ENCODE measurements at regions of chr18 and their contacts with region 1.

Region 1: DNA sequence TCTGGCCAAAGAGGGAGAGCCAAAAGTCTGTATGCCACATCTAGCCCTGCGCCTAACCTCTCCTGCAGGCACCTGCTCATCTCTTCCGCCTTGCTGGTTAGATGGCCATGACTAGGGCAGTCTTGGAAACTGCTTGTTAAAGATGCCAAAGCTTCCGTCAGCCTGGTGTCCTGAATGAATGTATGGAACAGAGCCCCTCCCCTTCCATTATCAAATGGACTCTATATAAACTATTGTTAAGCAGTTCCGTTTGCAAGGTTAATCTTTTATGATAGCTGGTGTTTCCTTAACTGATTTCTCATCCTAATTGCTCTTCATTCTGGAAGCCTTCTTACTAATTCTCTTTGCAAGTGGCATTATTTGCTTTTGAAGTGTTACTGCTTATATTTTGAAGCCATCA is 87.1 kb downstream of the ATP9B start:
- DNase-seq: no peak
- ATAC-seq: no peak
- H3K4me3 Mint-ChIP-seq: no peak overlapping the region
- H3K27ac Mint-ChIP-seq: no peak overlapping the region
- H3K4me1 Mint-ChIP-seq: peaks cover 11% of the 10 kb centered on the region
- H3K27me3 Mint-ChIP-seq: no peaks in the 10 kb centered on the region

Region 2: DNA sequence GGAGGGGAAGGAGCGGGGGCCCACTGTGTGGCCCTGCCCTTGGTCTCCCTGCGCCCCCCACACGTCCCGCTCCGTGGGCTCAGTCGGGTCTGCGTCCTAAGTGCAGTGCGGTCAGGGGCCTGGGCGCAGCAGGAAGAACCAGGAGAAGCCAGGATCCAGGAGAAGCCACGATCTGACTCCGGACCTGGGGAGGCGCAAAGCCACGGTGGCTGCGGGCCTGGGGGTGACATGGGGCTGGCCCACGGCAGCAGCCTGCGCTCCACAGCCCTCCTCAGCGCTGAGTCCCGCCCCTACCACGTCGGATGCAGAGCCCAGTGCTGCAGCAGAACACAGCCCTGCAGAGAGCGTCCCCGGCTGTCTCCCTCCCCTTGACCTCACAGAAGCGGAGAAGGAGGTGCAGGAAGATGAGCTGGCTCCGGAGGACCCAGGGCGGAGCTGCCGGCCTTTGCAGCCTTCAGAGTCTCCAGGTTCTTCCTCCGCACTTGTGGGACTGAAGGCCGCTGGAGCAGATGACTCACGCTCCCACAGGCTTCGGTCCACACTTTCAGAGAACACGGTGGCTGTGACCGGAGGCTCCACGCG is 765.9 kb before region 1 on chr18:
- CTCF ChIA-PET with region 1: no interaction called
- POLR2A ChIA-PET with region 1: no interaction called
- intact Hi-C with region 1: no loop called
- DNase-seq: no peak
- ATAC-seq: no peak
- H3K4me3 Mint-ChIP-seq: no peak overlapping the region
- H3K27ac Mint-ChIP-seq: no peak overlapping the region
- H3K4me1 Mint-ChIP-seq: no peaks in the 10 kb centered on the region
- H3K27me3 Mint-ChIP-seq: no peaks in the 10 kb centered on the region

Region 3: DNA sequence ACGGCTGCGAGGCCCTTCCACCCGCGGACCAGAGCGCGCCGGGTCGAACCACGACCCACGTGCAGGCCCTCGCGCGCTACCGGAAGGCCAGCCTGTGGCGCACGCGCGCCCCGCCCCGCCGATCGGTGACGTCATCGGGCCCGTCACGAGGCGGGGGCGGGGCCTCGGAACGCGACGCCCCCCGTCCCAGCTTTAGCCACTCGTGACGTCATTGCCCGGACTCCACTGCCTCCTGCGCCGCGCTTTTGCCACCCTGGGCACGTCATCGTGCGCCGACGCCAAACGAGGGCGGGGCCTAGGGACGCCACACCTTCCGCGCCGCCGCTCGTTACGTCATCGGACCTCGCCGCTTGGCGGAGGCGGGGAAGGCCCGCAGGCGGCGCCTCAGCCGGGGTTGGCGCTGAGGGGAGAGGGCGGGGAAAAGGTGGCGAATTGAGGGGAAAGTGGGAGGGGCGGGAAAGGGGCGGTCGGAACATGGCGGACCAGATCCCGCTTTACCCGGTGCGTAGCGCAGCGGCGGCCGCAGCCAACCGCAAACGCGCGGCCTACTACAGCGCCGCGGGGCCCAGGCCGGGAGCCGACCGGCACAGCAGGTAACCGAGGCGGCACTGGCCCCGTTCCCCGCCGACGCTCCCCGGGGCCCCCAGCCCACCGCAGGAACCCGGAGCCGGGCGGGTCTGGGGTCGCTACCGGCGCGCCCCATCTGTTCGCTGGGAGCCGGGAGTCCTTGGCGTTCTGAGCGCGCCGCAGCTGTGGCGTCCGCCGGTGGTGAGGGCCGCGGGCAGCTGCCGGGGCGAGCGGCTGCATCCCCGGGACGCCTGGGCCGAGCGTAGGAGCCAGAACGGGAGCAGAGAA is 87.2 kb before region 1 on chr18 and contains the start of gene ATP9B:
- CTCF ChIA-PET with region 1: no interaction called
- POLR2A ChIA-PET with region 1: no interaction called
- intact Hi-C with region 1: loop called in 1 of 2 experiments (anchors 5 kb)
- DNase-seq: peak; percentile 99
- ATAC-seq: peak; percentile 83
- H3K4me3 Mint-ChIP-seq: peak within 1 kb of the TSS; percentile 87
- H3K27ac Mint-ChIP-seq: peak within 1 kb of the TSS; percentile 99
- H3K4me1 Mint-ChIP-seq: peaks cover 38% of the 10 kb centered on the region
- H3K27me3 Mint-ChIP-seq: peaks cover 11% of the 10 kb centered on the region
- total RNA-seq, gene ATP9B: 19.4 to 20.8 TPM

Region 4: DNA sequence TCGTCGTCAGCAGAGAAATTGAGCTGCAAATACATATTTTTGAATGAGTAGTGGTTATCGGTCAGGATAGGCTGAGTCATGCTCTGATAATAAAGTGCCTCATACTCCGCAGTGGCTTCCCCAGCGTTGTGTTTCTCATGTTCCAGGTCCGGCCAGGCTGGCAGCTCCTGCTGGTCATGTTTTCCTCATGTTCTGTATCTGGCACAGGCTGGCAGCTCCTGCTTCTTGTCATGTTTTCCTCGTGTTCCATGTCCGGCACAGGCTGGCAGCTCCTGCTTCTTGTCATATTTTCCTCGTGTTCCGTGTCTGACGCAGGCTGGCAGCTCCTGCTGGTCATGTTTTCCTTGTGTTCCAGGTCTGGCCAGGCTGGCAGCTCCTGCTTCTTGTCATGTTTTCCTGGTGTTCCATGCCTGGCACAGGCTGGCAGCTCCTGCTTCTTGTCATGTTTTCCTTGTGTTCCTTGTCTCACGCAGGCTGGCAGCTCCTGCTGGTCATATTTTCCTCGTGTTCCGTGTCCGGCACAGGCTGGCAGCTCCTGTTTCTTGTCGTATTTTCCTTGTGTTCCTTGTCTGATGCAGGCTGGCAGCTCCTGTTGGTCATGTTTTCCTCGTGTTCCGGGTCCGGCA is 61.8 kb after region 1 on chr18:
- CTCF ChIA-PET with region 1: no interaction called
- POLR2A ChIA-PET with region 1: no interaction called
- intact Hi-C with region 1: loop called in 1 of 2 experiments (anchors 10 kb)
- DNase-seq: no peak
- ATAC-seq: no peak
- H3K4me3 Mint-ChIP-seq: no peak overlapping the region
- H3K27ac Mint-ChIP-seq: no peak overlapping the region
- H3K4me1 Mint-ChIP-seq: no peaks in the 10 kb centered on the region
- H3K27me3 Mint-ChIP-seq: no peaks in the 10 kb centered on the region

Measured in activated CD4-positive, alpha-beta T cell treated with anti-CD3 and anti-CD28 coated beads for 36 hours (primary cell).